Gastrocnemius medialis (tissue), 4 donors: ENCODE measurements at regions of chr17 and their contacts with region 1.

Region 1: DNA sequence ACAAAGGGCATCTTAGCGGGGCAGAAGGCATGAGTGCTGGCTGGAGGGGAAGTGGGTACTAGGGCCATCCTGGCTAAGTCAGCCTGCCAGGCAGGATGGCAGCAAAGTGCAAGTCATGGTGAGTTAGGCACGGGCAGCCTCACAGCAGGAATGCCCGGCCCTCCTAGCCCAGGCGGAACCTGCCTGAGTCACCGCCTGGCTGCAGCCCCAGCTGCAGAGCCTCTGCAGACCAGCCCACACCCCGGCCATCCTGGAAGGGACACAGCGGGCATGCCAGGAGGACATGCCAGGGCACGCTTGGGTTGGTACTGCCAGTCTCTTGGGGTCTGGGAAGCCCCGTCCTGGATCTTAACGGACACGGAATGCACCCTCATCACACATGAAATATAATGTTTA is 4.9 kb upstream of the ALDH3A1 start:
- DNase-seq: peak; percentile 87 to 93
- ATAC-seq: peak; percentile 83 to 84
- H3K4me3 ChIP-seq: peak overlapping the region in 1 of 4 donors; percentile 7
- H3K27ac ChIP-seq: peak overlapping the region; percentile 83 to 94 (median 92)
- H3K4me1 ChIP-seq: peaks cover 17 to 33% of the 10 kb centered on the region in 2 donors
- H3K27me3 ChIP-seq: no peaks in the 10 kb centered on the region
- CTCF ChIP-seq: no peak
- POLR2A ChIP-seq: peak; percentile 21 to 35

Region 2: DNA sequence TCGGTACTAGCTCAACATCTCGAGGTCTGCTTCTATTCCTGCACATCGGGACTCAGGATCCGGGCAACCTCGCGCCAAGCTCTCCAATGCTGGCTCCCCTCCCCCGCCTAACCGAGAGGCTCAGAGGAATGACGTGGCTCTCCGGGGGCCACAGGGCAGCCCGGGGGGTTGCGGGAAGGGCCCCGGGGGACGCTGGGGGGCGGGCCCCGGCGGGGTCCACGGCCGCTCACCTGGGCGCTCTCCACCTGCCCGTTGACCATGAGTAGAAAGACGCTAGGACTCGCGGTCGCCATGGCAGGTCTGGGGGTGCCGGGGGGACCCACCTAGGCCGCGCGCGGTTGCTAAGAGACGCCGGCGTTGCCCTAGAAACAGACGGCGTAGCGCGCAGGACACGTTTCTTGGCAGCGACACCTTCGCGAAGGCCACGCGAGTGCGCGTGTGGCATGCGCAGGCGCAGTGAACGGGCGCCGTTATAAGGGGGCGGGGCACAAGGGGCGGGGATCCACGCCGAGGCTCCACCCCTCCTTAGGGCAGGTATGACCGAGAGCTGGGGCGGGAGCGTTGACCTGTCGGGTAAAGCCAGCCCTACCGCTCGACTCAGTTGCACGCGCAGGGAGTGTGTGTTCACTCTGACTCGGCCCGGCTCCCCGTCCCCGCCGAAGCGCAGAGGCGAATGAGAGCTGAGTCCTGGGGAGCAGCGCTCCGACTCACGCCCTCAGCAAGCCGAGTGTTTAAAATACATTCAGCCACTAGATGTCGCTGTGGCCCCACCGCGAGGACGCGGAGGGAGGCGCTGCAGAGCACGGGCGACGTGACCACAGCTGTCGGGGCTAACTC is 390.6 kb before region 1 on chr17 and contains the start of gene B9D1:
- in situ Hi-C with region 1: loop called in 3 of 4 experiments (anchors 25 kb)
- intact Hi-C with region 1: loop called (anchors 5 kb)
- DNase-seq: peak; percentile 86 to 93
- ATAC-seq: peak; percentile 96 to 97
- H3K4me3 ChIP-seq: peak within 1 kb of the TSS; percentile 60 to 86 (median 72)
- H3K27ac ChIP-seq: peak within 1 kb of the TSS; percentile 79 to 92 (median 84)
- H3K4me1 ChIP-seq: peaks cover 4 to 9% of the 10 kb centered on the region in 2 donors
- H3K27me3 ChIP-seq: no peaks in the 10 kb centered on the region
- CTCF ChIP-seq: peak; percentile 99
- POLR2A ChIP-seq: peak in 1 of 2 donors; percentile 44
- total RNA-seq, gene B9D1: 6.5 to 16.4 (median 14.5) TPM

Region 3: DNA sequence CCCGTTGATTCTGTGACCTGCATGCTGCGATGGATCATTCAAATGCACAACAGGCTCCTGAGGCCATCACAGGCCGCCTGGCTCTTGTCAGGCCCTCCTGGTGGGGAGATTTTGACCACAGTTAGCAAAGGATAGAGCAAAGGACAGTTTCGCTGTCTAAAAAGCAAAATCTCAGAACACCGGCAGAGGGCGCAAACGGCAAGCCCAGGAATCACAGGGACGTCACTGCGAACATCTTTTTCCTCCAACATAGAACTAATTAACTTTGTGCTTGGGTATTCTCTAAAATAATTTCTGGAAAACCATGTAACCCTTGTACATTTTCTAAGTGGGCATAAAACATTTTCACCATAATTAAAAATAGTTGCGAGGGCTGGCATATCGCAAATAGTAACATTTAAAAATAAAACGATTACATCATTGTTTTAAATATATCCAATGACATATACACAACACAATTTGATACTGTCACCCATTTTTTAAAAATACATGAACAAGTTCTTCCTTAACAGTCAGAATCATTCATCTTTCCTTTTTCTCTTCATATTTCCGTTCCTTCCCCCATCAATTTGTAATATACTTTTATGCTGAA is 239.1 kb before region 1 on chr17:
- in situ Hi-C with region 1: no loop called
- intact Hi-C with region 1: loop called (anchors 5 kb)
- DNase-seq: peak in 1 of 2 donors; percentile 65
- ATAC-seq: peak; percentile 88 to 94
- H3K4me3 ChIP-seq: peak overlapping the region in 2 of 4 donors; percentile 19 to 24
- H3K27ac ChIP-seq: peak overlapping the region; percentile 46 to 76 (median 62)
- H3K4me1 ChIP-seq: peaks cover 3 to 5% of the 10 kb centered on the region in 2 donors
- H3K27me3 ChIP-seq: no peaks in the 10 kb centered on the region
- CTCF ChIP-seq: peak; percentile 90 to 94 (median 93)
- POLR2A ChIP-seq: no peak

Region 4: DNA sequence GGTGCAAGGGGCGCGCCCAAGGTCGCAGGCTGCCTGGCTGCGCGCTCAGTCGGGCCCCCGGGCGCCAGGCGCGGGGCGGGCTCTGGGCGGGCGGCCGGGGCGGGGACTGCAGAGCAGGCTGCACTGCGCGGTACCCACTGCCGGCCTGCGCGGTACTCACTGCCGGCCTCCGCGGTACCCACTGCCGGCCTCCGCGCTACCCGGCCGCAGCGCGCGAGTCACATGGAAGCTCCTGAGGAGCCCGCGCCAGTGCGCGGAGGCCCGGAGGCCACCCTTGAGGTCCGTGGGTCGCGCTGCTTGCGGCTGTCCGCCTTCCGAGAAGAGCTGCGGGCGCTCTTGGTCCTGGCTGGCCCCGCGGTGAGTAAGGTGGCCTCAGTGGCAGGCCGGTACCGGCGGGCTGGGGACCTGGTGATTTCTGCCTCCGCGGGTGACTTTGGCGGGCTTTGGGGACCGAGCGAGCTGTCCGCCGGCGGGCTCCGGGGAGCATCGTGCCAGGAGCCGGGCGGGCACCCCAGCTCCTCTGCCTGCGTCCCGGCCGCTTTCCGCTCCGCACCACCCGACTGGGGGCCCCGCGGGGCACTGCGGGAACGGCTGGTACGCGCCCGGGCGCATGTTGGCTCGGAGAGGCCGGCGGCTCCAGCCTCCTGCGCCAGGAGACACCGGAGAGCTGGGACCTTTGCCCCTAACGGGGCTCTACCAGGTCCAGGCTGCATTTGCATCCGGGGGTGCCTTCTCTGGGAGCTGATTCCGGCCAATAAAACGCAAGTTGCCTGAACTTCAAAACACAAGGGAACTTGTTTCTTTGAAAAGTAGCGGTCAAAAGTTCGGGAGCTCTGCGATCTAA is 219.1 kb before region 1 on chr17 and contains the start of gene SLC47A1:
- in situ Hi-C with region 1: no loop called
- intact Hi-C with region 1: loop called (anchors 5 kb)
- DNase-seq: peak in 1 of 2 donors; percentile 56
- ATAC-seq: peak; percentile 44 to 48
- H3K4me3 ChIP-seq: peak within 1 kb of the TSS; percentile 72 to 89 (median 80)
- H3K27ac ChIP-seq: peak within 1 kb of the TSS; percentile 89 to 94 (median 91)
- H3K4me1 ChIP-seq: peaks cover 42 to 43% of the 10 kb centered on the region in 2 donors
- H3K27me3 ChIP-seq: no peaks in the 10 kb centered on the region
- CTCF ChIP-seq: no peak
- POLR2A ChIP-seq: peak; percentile 62 to 67
- total RNA-seq, gene SLC47A1: 34.2 to 257 (median 133) TPM

Region 5: DNA sequence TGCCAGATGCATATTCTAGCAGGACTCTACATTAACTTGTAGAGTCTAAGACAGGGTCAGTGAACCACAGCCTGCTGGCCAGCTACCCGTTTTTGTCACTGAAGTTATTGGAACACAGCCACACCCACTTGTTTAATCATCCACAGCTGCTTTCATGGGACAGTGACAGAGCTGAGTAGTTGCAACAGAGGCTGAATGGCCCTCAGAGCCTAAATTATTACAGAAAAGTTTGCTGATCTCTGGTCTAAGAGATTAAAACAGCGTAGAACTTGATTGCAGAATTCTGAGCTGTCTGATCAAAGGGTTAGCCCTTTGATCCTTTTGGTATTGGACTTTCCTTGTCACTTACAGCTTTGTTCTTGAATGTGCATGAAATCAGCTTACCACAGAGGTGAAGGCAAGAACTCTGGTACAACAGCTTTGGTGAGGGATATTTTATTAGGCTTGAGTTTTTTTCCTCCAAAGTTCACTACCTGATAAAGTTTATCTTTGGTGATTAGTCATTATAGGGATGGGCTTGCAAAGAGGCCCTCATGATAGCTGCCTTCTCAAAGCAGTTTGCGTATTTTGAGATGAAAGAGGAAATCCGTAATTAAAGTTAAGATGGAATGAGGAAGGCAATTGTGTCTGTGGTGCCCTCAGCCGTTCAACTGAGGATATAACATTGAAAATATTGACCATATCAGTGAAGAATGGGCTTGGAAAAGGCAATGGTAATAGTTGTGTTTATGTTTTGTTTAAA is 80.9 kb before region 1 on chr17:
- in situ Hi-C with region 1: no loop called
- intact Hi-C with region 1: loop called (anchors 5 kb)
- DNase-seq: peak; percentile 59 to 77
- ATAC-seq: peak; percentile 99 to 100
- H3K4me3 ChIP-seq: no peak overlapping the region
- H3K27ac ChIP-seq: peak overlapping the region; percentile 74 to 87 (median 76)
- H3K4me1 ChIP-seq: peaks cover 0 to 15% of the 10 kb centered on the region in 2 donors
- H3K27me3 ChIP-seq: no peaks in the 10 kb centered on the region
- CTCF ChIP-seq: no peak
- POLR2A ChIP-seq: no peak

Region 6: DNA sequence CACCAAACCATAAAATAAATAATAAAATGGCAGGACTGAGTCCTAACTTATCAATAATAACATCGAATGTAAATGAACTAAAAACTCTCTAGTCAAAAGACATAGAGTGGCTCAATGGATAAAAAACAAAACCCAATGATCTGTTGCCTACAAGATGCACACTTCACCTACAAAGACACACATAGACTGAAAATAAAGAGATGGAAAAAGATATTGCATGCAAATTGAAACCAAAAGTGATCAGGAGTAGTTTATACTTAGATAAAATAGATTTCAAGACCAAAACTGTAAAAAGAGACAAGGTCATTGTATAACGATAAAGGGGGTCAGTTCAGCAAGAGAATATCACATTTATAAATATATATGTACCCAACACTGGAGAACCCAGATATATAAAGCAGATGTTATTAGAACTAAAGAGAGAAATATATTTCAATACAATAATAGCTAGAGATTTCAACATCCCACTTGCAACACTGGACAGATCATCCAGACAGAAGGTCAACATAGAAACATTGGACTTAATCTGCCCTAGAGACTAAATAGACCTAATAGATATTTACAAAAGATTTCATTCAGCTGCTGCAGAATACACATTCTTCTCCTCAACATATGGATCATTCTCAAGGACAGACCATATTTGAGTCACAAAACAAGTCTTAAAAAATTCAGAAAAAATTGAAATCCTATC is 66.5 kb before region 1 on chr17:
- in situ Hi-C with region 1: no loop called
- intact Hi-C with region 1: no loop called
- DNase-seq: no peak
- ATAC-seq: no peak
- H3K4me3 ChIP-seq: no peak overlapping the region
- H3K27ac ChIP-seq: no peak overlapping the region
- H3K4me1 ChIP-seq: no peaks in the 10 kb centered on the region
- H3K27me3 ChIP-seq: no peaks in the 10 kb centered on the region
- CTCF ChIP-seq: no peak
- POLR2A ChIP-seq: no peak

Region 7: GRCh38 chr17:19728079-19728495 is 25.0 kb before region 1 on chr17:
- in situ Hi-C with region 1: no loop called
- intact Hi-C with region 1: loop called (anchors 1 kb)
- DNase-seq: peak; percentile 88 to 92
- ATAC-seq: peak; percentile 83 to 84
- H3K4me3 ChIP-seq: no peak overlapping the region
- H3K27ac ChIP-seq: peak overlapping the region; percentile 91 to 98 (median 94)
- H3K4me1 ChIP-seq: peaks cover 34 to 39% of the 10 kb centered on the region in 2 donors
- H3K27me3 ChIP-seq: no peaks in the 10 kb centered on the region
- CTCF ChIP-seq: no peak
- POLR2A ChIP-seq: no peak